ENCODE measurements at regions of chr18 and their contacts with region 1.

Region 1: GRCh38 chr18:76803814-76804213 is 18.5 kb upstream of the ZNF236 start:
- DNase-seq: peak; percentile 68
- H3K27ac ChIP-seq: no peak overlapping the region
- CTCF ChIP-seq: peak; percentile 96

Region 2: GRCh38 chr18:76819416-76820136 is 15.8 kb after region 1 on chr18:
- CTCF ChIA-PET with region 1: interaction called, 14 read pairs
- POLR2A ChIA-PET with region 1: interaction called, 5 read pairs
- DNase-seq: no peak
- H3K27ac ChIP-seq: peak overlapping the region; percentile 33; the same call in 1 of the 2 replicates
- CTCF ChIP-seq: no peak

Region 3: GRCh38 chr18:76943542-76944339 is 139.9 kb after region 1 on chr18:
- CTCF ChIA-PET with region 1: no interaction called
- POLR2A ChIA-PET with region 1: no interaction called
- DNase-seq: no peak
- H3K27ac ChIP-seq: peak overlapping the region; percentile 60
- CTCF ChIP-seq: no peak

Region 4: GRCh38 chr18:76982841-76983587 is 179.2 kb after region 1 on chr18:
- CTCF ChIA-PET with region 1: interaction called, 11 read pairs
- POLR2A ChIA-PET with region 1: no interaction called
- DNase-seq: peak; percentile 90
- H3K27ac ChIP-seq: no peak overlapping the region
- CTCF ChIP-seq: peak; percentile 98

Region 5: DNA sequence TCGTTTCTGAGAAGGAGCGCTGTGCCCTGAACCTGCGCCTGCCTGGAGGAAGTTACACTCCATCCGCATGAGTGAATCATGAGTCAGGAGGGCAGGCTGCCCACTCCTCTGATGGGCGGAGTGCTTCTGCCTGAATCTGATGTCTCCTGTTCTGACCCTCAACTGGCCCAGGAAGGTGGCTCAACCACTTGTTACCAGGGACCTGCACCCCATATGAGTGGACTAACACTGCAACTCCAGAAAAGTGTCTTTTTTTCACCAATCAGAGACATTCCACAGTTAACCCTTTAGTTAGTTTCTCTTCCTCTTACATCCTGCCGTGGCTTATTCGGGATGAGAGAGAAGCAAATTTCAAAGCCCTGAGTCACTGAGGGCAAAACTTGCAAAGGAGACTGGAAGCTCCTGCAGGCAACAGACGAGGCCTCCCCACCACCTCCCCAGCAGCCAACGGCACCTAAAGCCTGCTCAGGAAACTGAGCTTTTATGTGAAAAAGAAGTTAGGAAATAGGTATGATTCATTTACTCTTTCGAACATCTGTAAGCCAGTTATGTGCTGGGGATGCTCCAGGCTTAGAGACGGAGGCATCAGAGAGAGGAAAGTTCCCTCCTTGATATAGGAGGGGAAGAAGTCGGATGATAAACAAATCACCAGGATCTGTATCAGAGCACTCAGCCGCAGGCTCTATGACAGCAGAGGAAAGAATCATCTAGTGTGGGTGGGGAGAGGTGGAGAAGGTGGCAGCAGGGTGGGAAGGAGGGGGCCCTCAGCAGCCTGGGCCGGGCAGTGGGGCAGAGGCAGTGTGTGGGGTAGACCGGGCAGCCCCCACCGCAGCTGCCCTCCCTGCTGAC is 297.8 kb after region 1 on chr18:
- CTCF ChIA-PET with region 1: no interaction called
- POLR2A ChIA-PET with region 1: no interaction called
- DNase-seq: peak; percentile 93
- H3K27ac ChIP-seq: peak overlapping the region; percentile 100
- CTCF ChIP-seq: no peak

Measured in RWPE1 (cell line).